ENCODE measurements at regions of chr5 and their contacts with region 1.

Region 1: DNA sequence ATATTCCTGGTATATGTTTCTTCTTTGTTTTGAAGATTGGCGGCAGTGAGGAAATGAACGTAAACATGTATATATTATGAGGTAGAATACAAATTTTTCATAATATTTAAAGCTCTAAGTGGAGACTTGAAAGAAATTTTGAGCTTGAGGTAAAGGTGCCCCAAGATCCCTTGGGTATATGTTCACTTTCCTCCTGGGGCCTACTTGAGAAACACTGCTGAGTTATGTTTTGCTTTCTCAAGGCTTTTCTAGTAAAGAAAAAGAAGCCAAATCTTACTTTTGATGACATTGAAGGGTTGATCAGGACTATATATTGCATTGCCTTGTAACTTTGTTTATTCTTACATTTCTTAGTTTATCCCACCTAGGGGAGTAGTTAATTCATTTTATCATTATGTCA is 30.7 kb downstream of the AP3S1 start:
- DNase-seq: no peak
- ATAC-seq: no peak
- H3K4me3 ChIP-seq: no peak overlapping the region
- H3K4me3 Mint-ChIP-seq: no peak overlapping the region
- H3K27ac ChIP-seq: no peak overlapping the region
- H3K27ac Mint-ChIP-seq: no peak overlapping the region
- H3K4me1 ChIP-seq: no peaks in the 10 kb centered on the region
- H3K4me1 Mint-ChIP-seq: no peaks in the 10 kb centered on the region
- H3K27me3 ChIP-seq: no peaks in the 10 kb centered on the region
- H3K27me3 Mint-ChIP-seq: no peaks in the 10 kb centered on the region

Region 2: DNA sequence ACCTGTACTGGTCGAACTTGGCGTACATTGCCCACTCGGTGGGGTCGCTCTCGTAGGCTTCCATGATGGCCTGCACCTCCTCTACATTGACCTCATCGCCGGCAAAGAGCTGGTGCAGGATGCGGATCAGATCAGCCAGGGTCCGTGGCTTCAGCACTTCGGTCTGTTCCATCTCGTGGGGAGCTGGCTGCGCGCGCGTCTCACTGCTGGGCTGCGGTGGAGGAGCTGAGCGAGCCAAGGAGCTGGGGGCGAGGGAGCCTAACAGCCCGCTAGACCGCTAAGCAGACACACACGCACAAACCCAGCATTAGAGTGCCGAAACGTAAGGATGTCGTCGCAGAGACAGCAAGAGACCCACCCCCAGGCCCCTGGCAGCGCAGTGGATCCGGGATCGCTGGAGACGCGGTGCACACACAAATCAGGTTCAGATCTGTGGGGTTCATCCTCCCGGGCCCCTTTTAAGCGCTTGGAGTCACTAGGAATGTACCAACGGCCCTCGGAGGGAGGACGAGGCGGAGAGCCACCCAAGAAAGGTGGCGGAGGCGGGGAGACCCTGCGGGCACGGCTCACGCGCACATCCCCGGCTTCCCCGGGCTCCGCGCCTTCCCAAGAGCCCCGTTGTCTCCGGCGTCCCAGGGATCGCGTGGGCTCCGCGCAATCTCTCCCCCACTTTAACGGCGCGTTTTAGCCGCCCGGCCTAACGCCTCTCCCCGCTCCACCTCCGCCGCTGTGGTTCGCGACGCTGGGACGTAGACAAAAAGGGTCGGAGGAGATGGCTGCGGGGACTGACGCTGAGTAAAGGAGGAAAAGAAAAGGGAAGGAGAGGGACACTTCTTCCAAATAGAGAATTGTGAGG is 56.0 kb before region 1 on chr5 and contains the start of gene CDO1:
- CTCF ChIA-PET with region 1: no interaction called
- POLR2A ChIA-PET with region 1: interaction called in 1 of 2 experiments, 10 read pairs
- DNase-seq: peak in 6 of 35 experiments; percentile 4 to 22 (median 12)
- ATAC-seq: peak; percentile 34 to 54 (median 45)
- H3K4me3 ChIP-seq: peak within 1 kb of the TSS; percentile 8 to 80
- H3K4me3 Mint-ChIP-seq: peak within 1 kb of the TSS; percentile 60 to 72 (median 68)
- H3K27ac ChIP-seq: no peak within 1 kb of the TSS
- H3K27ac Mint-ChIP-seq: no peak within 1 kb of the TSS
- H3K4me1 ChIP-seq: peaks cover 0 to 15% of the 10 kb centered on the region in 2 experiments
- H3K4me1 Mint-ChIP-seq: peaks cover 17 to 20% (median 18%) of the 10 kb centered on the region in 3 donors
- H3K27me3 ChIP-seq: peaks cover 23 to 34% of the 10 kb centered on the region in 2 experiments
- H3K27me3 Mint-ChIP-seq: peaks cover 68 to 72% of the 10 kb centered on the region in 2 donors
- total RNA-seq, gene CDO1: 0.23 to 0.82 TPM in 2 of 5 donors, not detected in the others

Measured in T-cell (primary cell).